ENCODE measurements at regions of chr12 and their contacts with region 1.

Region 1: GRCh38 chr12:76348079-76348901 is at the start of gene BBS10:
- DNase-seq: peak; percentile 88 to 96 (median 93)
- ATAC-seq: peak; percentile 98
- H3K4me3 ChIP-seq: peak within 1 kb of the TSS; percentile 69 to 78
- H3K27ac ChIP-seq: peak within 1 kb of the TSS; percentile 89 to 93
- H3K4me1 ChIP-seq: peaks cover 3 to 20% of the 10 kb centered on the region in 2 donors
- H3K27me3 ChIP-seq: no peaks in the 10 kb centered on the region
- CTCF ChIP-seq: peak; percentile 32 to 35
- polyA plus RNA-seq, gene BBS10: 27.5 to 33.3 (median 28.2) TPM

Region 2: DNA sequence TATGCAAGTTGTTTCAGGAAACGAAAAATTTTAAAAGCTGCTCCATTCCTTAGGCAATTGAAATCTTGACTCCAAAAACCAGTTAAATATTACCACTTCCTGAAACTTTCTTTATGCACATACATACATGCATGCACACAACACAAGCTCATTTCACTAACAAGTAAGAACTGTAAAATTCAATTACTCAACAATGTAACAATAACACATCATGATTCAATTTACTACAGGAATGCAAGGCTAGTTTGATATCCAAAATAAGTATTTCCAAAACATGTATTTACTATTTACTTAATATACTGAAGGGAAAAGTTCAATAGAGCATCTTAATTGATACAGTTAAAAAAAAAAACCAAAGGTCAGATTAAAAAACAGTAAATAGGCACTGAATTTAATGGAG is 283.4 kb before region 1 on chr12:
- intact Hi-C with region 1: loop called in 1 of 2 experiments (anchors 10 kb)
- DNase-seq: no peak
- ATAC-seq: no peak
- H3K4me3 ChIP-seq: no peak overlapping the region
- H3K27ac ChIP-seq: no peak overlapping the region
- H3K4me1 ChIP-seq: peaks cover 0 to 13% of the 10 kb centered on the region in 2 donors
- H3K27me3 ChIP-seq: no peaks in the 10 kb centered on the region
- CTCF ChIP-seq: no peak

Region 3: DNA sequence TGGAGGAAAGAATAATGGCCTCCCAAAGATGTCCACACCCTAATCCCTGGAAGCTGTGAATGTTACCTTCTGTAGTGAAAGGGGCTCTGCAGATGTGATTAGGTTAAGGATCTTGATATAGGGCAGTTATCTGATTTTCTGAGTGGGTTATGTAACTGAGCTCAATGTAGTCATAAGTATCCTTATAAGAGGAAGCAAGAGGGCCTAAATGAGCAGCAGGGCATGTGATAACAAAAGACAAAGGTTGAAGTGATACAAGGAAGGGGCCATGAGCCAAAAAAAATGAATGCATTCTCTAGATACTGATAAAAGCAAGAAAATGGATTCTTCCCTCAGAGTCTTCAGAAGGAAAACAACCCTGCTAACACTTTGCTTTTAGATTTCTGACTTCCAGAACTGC is 132.5 kb after region 1 on chr12:
- intact Hi-C with region 1: no loop called
- DNase-seq: no peak
- ATAC-seq: no peak
- H3K4me3 ChIP-seq: no peak overlapping the region
- H3K27ac ChIP-seq: no peak overlapping the region
- H3K4me1 ChIP-seq: no peaks in the 10 kb centered on the region
- H3K27me3 ChIP-seq: no peaks in the 10 kb centered on the region
- CTCF ChIP-seq: no peak

Measured in left lung (tissue), 14 donors.